ENCODE measurements at regions of chr22 and their contacts with region 1.

Region 1: GRCh38 chr22:19122143-19122751 is at the start of gene DGCR2:
- DNase-seq: peak; percentile 98 to 99
- ATAC-seq: peak; percentile 99
- H3K4me3 ChIP-seq: peak within 1 kb of the TSS; percentile 87 to 93
- H3K27ac ChIP-seq: peak within 1 kb of the TSS; percentile 76 to 84
- H3K4me1 ChIP-seq: no peaks in the 10 kb centered on the region
- H3K27me3 ChIP-seq: no peaks in the 10 kb centered on the region
- total RNA-seq, gene DGCR2: 37.0 to 43.5 TPM

Region 2: GRCh38 chr22:19447388-19448075 is 325.3 kb after region 1 on chr22 and contains the start of gene C22orf39:
- intact Hi-C with region 1: loop called in 1 of 2 experiments (anchors 2 kb)
- DNase-seq: peak; percentile 90 to 94
- ATAC-seq: peak; percentile 96
- H3K4me3 ChIP-seq: peak within 1 kb of the TSS; percentile 64 to 83
- H3K27ac ChIP-seq: peak within 1 kb of the TSS in 1 of 2 donors; percentile 87
- H3K4me1 ChIP-seq: no peaks in the 10 kb centered on the region
- H3K27me3 ChIP-seq: no peaks in the 10 kb centered on the region
- total RNA-seq, gene C22orf39: 29.3 to 33.4 TPM

Measured in aorta (tissue), 5 donors.